ENCODE measurements at regions of chr7 and their contacts with region 1.

Region 1: GRCh38 chr7:149742075-149742701 is 31.2 kb downstream of the ZNF467 start:
- DNase-seq: no peak
- ATAC-seq: peak; percentile 95
- H3K4me3 ChIP-seq: peak overlapping the region; percentile 43; the same call in 1 of the 2 replicates
- H3K27ac ChIP-seq: no peak overlapping the region
- H3K4me1 ChIP-seq: peaks cover 5% of the 10 kb centered on the region; the same call in 1 of the 2 replicates
- H3K27me3 ChIP-seq: no peaks in the 10 kb centered on the region; a peak in 2 of 4 replicates
- CTCF ChIP-seq: peak; percentile 88 to 95 (median 91)
- EP300 ChIP-seq: no peak
- POLR2A ChIP-seq: no peak
- RAD21 ChIP-seq: peak; percentile 84

Region 2: GRCh38 chr7:149624419-149625339 is 117.5 kb before region 1 on chr7:
- CTCF ChIA-PET with region 1: interaction called, 13 read pairs
- POLR2A ChIA-PET with region 1: no interaction called
- RAD21 ChIA-PET with region 1: interaction called, 5 read pairs
- SMC1A ChIA-PET with region 1: no interaction called
- in situ Hi-C with region 1: no loop called
- intact Hi-C with region 1: no loop called
- DNase-seq: peak; percentile 50
- ATAC-seq: peak; percentile 92
- H3K4me3 ChIP-seq: peak overlapping the region; percentile 99
- H3K27ac ChIP-seq: peak overlapping the region; percentile 74
- H3K4me1 ChIP-seq: peaks cover 24% of the 10 kb centered on the region
- H3K27me3 ChIP-seq: peaks cover 0 to 3% of the 10 kb centered on the region in 2 experiments; a peak in 2 of 4 replicates
- CTCF ChIP-seq: peak; percentile 78 to 88 (median 84)
- EP300 ChIP-seq: no peak
- POLR2A ChIP-seq: peak; percentile 97
- RAD21 ChIP-seq: peak; percentile 44

Region 3: GRCh38 chr7:149669121-149669818 is 72.9 kb before region 1 on chr7:
- CTCF ChIA-PET with region 1: interaction called, 301 read pairs
- POLR2A ChIA-PET with region 1: interaction called, 5 read pairs
- RAD21 ChIA-PET with region 1: interaction called, 180 read pairs
- SMC1A ChIA-PET with region 1: interaction called, 104 read pairs
- in situ Hi-C with region 1: loop called (anchors 10 kb)
- intact Hi-C with region 1: loop called (anchors 1 kb)
- DNase-seq: no peak
- ATAC-seq: peak; percentile 65
- H3K4me3 ChIP-seq: no peak overlapping the region
- H3K27ac ChIP-seq: no peak overlapping the region
- H3K4me1 ChIP-seq: no peaks in the 10 kb centered on the region
- H3K27me3 ChIP-seq: peaks cover 0 to 3% of the 10 kb centered on the region in 2 experiments; a peak in 1 of 4 replicates
- CTCF ChIP-seq: peak; percentile 33 to 48 (median 40); a peak in 3 of 6 replicates
- EP300 ChIP-seq: no peak
- POLR2A ChIP-seq: no peak
- RAD21 ChIP-seq: peak; percentile 40; the same call in 1 of the 2 replicates

Region 4: DNA sequence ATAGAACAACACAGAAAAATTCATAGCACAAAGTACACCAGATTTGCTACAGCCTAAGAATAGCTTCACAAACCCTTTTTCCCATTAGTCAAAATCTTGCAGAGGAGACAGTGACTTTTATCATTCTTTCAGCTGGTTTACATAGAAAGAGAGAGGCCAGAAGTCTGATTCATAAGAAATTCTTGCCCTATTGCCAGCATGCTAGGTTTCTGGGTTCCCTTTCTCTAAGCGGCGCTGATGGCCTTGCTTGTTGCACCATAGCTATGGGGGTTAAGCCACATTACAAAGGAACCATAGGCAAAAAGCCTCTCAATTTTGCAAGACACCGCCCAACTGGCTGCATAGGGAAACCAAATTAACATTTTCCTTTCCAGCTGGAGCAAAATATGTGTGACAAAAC is 56.2 kb before region 1 on chr7:
- CTCF ChIA-PET with region 1: interaction called, 14 read pairs
- POLR2A ChIA-PET with region 1: no interaction called
- RAD21 ChIA-PET with region 1: interaction called, 6 read pairs
- SMC1A ChIA-PET with region 1: interaction called, 5 read pairs
- in situ Hi-C with region 1: no loop called
- intact Hi-C with region 1: no loop called
- DNase-seq: no peak
- ATAC-seq: no peak
- H3K4me3 ChIP-seq: no peak overlapping the region
- H3K27ac ChIP-seq: no peak overlapping the region
- H3K4me1 ChIP-seq: no peaks in the 10 kb centered on the region
- H3K27me3 ChIP-seq: no peaks in the 10 kb centered on the region
- CTCF ChIP-seq: no peak
- EP300 ChIP-seq: no peak
- POLR2A ChIP-seq: no peak
- RAD21 ChIP-seq: no peak

Region 5: GRCh38 chr7:149720372-149721248 is 21.6 kb before region 1 on chr7:
- CTCF ChIA-PET with region 1: interaction called, 15 read pairs
- POLR2A ChIA-PET with region 1: interaction called, 4 read pairs
- RAD21 ChIA-PET with region 1: interaction called, 4 read pairs
- SMC1A ChIA-PET with region 1: interaction called, 10 read pairs
- in situ Hi-C with region 1: no loop called
- intact Hi-C with region 1: no loop called
- DNase-seq: no peak
- ATAC-seq: peak; percentile 79
- H3K4me3 ChIP-seq: no peak overlapping the region
- H3K27ac ChIP-seq: no peak overlapping the region; the same call in 1 of the 2 replicates
- H3K4me1 ChIP-seq: peaks cover 8% of the 10 kb centered on the region
- H3K27me3 ChIP-seq: no peaks in the 10 kb centered on the region
- CTCF ChIP-seq: no peak
- EP300 ChIP-seq: peak; percentile 17 to 21; a peak in 1 of 4 replicates
- POLR2A ChIP-seq: no peak
- RAD21 ChIP-seq: no peak

Region 6: DNA sequence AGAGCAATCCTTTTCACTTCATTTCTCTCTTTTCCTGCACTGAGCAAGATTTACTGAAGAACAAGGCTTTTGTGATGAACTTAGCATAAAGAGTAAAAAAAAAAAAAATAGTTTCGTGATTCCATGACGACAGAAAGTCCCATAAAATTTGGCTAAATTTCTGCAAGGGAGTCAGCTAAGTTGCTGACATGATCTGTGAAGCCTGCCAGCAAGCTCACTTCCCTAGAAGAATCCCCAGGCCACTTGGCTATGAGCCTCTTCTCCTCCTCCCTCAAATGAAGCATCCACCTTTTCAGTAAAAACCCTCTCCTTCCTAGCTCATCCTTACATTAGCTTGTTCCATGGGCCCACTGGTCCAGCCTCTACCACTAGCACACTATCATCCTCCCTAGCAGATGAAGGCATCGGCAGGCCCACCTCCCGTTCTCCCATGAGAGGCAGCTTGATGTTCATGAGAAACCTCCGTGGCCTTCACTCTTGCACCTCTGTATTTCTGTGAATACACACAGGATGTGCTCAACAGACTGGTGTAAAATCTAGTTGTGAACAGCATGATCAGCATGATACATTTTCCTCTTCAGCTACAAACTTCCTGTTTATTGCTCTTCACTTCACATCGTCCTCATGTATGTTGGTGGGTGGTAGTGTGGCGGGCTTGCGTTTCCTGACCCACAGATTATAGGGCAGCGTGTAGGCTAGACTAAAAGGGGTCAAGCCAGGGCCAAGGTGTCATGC is 739.2 kb after region 1 on chr7:
- CTCF ChIA-PET with region 1: no interaction called
- POLR2A ChIA-PET with region 1: no interaction called
- RAD21 ChIA-PET with region 1: no interaction called
- SMC1A ChIA-PET with region 1: no interaction called
- in situ Hi-C with region 1: no loop called
- intact Hi-C with region 1: no loop called
- DNase-seq: no peak
- ATAC-seq: no peak
- H3K4me3 ChIP-seq: no peak overlapping the region
- H3K27ac ChIP-seq: no peak overlapping the region
- H3K4me1 ChIP-seq: no peaks in the 10 kb centered on the region
- H3K27me3 ChIP-seq: no peaks in the 10 kb centered on the region
- CTCF ChIP-seq: no peak
- EP300 ChIP-seq: no peak
- POLR2A ChIP-seq: no peak
- RAD21 ChIP-seq: no peak

Region 7: GRCh38 chr7:150645259-150646020 is 903.3 kb after region 1 on chr7:
- CTCF ChIA-PET with region 1: no interaction called
- POLR2A ChIA-PET with region 1: no interaction called
- RAD21 ChIA-PET with region 1: no interaction called
- SMC1A ChIA-PET with region 1: no interaction called
- in situ Hi-C with region 1: no loop called
- intact Hi-C with region 1: no loop called
- DNase-seq: no peak
- ATAC-seq: no peak
- H3K4me3 ChIP-seq: no peak overlapping the region
- H3K27ac ChIP-seq: no peak overlapping the region
- H3K4me1 ChIP-seq: peaks cover 14% of the 10 kb centered on the region
- H3K27me3 ChIP-seq: no peaks in the 10 kb centered on the region
- CTCF ChIP-seq: no peak
- EP300 ChIP-seq: no peak
- POLR2A ChIP-seq: no peak
- RAD21 ChIP-seq: no peak